Ascending aorta (tissue), 2 donors: ENCODE measurements at regions of chrX and their contacts with region 1.

Region 1: GRCh38 chrX:23907498-23908218 is at the starts of genes APOO and CXorf58:
- DNase-seq: peak; percentile 58 to 94
- H3K4me3 ChIP-seq: peak within 1 kb of the TSS; percentile 54 to 66
- H3K27ac ChIP-seq: peak within 1 kb of the TSS; percentile 78
- H3K4me1 ChIP-seq: no peaks in the 10 kb centered on the region
- H3K27me3 ChIP-seq: no peaks in the 10 kb centered on the region
- CTCF ChIP-seq: peak; percentile 59 to 88 (median 76)
- total RNA-seq, gene APOO: not detected
- total RNA-seq, gene CXorf58: not detected

Region 2: GRCh38 chrX:23667239-23668177 is 240.2 kb before region 1 on chrX and contains the start of gene PRDX4:
- intact Hi-C with region 1: loop called (anchors 1 kb)
- DNase-seq: peak; percentile 52 to 90
- H3K4me3 ChIP-seq: peak within 1 kb of the TSS; percentile 61 to 69
- H3K27ac ChIP-seq: peak within 1 kb of the TSS; percentile 74 to 76
- H3K4me1 ChIP-seq: no peaks in the 10 kb centered on the region
- H3K27me3 ChIP-seq: no peaks in the 10 kb centered on the region
- CTCF ChIP-seq: no peak
- total RNA-seq, gene PRDX4: 112 TPM

Region 3: GRCh38 chrX:23742697-23743622 is 164.7 kb before region 1 on chrX and contains the start of gene ACOT9:
- intact Hi-C with region 1: loop called (anchors 1 kb)
- DNase-seq: peak; percentile 87 to 97
- H3K4me3 ChIP-seq: peak within 1 kb of the TSS; percentile 71 to 79
- H3K27ac ChIP-seq: peak within 1 kb of the TSS; percentile 93 to 98
- H3K4me1 ChIP-seq: no peaks in the 10 kb centered on the region
- H3K27me3 ChIP-seq: no peaks in the 10 kb centered on the region
- CTCF ChIP-seq: no peak
- total RNA-seq, gene ACOT9: 6.6 TPM

Region 4: DNA sequence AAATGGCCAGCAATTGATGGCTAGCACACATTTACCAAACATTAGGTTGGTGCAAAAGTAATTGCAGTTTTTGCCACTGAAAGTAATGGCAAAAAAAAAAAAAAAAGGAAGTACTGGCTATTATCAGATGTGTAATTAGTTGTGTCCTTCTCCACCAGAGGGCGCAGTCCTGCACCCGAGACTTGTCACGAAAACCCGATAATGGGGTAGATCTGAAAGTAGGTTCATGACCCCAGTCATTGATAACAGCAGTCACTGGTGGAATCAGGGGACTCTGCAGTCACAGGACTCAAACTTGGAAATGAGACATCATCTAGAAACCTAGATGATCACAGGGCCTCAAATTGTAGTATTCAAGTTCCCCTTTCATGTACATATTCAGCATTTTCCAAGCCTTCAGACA is 151.5 kb before region 1 on chrX:
- intact Hi-C with region 1: no loop called
- DNase-seq: peak in 1 of 2 donors; percentile 75
- H3K4me3 ChIP-seq: no peak overlapping the region
- H3K27ac ChIP-seq: no peak overlapping the region
- H3K4me1 ChIP-seq: no peaks in the 10 kb centered on the region
- H3K27me3 ChIP-seq: no peaks in the 10 kb centered on the region
- CTCF ChIP-seq: peak in 2 of 3 experiments; percentile 26 to 36

Region 5: DNA sequence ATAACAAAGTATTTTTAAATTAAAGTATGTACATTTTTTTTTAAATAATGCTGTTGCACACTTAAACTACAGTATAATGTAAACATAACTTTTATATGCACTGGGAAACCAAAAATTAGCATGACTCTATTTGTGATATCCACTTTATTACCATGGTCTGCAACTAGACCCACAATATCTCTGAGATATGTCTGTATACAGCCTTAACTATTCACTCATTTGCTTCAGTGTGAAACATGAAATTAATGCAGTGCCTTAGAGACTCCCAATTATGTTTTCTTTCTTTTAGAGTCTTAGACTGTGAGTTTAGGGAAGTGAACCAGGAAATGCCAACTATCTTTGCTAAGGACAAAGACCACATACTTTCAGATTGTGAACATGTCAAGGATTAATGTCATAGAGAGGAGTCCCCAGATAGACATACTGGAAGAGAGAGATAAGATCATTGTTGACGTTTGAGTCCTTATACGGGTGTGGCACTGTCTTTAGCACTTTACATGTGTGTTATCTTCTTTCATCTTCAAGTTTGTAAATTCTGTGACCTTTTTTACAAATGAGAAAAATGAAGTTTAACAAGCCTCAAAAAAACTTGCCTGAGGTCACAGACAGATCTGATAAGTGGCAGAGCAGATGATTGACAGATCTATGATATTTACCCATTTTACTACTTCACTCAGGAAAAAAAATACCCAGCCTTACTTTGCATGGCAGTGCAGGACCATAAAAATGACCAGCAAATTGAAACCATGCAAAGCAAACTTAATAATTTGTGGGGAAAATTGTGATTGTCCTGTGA is 23.4 kb after region 1 on chrX:
- intact Hi-C with region 1: no loop called
- DNase-seq: no peak
- H3K4me3 ChIP-seq: no peak overlapping the region
- H3K27ac ChIP-seq: no peak overlapping the region
- H3K4me1 ChIP-seq: no peaks in the 10 kb centered on the region
- H3K27me3 ChIP-seq: no peaks in the 10 kb centered on the region
- CTCF ChIP-seq: no peak

Region 6: DNA sequence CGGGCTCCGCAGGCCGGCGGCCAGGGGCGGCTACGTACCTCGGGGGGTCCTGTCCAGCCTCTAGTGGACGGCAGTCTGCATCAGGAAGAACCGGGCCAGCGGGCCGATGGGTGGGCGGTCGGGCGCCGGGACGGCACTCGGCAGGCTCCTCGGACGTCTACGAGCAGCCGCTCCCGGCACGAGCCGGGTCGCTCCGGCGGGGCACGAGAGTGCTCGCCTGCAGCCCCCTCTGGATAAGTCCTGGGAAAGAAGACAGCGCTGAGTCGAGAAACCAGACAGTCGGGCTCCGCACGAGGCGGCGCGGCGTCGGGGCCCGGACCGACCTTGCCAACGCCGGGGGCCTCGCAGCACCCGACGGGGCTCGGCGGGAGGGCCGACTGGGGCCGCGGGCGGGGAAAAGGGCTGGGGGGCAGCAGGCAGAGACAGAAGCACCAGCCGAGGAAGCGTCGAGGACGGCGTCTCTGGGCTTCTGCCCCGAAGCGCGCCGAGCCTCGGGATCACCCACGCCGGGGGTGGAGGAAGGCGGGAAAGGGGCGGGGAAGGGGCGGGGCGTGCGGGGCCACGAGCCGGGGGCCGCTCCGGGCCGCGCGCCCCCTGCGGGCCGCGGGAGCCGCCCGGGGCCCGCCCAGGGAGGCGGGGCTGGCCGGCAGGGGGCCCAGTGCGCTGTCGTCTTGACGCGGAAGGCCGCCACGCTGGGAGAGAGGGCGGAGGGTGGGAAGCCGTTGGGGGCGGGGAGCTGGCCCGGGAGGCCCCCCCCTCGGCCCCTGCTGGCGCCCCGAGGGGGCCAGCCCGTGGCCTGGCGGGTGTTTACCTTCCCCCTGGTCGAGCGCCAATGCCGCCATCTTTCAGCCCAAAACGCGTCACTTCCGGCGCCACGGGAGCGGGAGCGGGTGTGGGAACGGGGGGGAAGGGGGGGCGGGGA is 117.4 kb after region 1 on chrX:
- intact Hi-C with region 1: loop called (anchors 1 kb)
- DNase-seq: peak; percentile 43 to 90
- H3K4me3 ChIP-seq: peak overlapping the region; percentile 75 to 94
- H3K27ac ChIP-seq: peak overlapping the region; percentile 93 to 96
- H3K4me1 ChIP-seq: no peaks in the 10 kb centered on the region
- H3K27me3 ChIP-seq: no peaks in the 10 kb centered on the region
- CTCF ChIP-seq: no peak

Region 7: DNA sequence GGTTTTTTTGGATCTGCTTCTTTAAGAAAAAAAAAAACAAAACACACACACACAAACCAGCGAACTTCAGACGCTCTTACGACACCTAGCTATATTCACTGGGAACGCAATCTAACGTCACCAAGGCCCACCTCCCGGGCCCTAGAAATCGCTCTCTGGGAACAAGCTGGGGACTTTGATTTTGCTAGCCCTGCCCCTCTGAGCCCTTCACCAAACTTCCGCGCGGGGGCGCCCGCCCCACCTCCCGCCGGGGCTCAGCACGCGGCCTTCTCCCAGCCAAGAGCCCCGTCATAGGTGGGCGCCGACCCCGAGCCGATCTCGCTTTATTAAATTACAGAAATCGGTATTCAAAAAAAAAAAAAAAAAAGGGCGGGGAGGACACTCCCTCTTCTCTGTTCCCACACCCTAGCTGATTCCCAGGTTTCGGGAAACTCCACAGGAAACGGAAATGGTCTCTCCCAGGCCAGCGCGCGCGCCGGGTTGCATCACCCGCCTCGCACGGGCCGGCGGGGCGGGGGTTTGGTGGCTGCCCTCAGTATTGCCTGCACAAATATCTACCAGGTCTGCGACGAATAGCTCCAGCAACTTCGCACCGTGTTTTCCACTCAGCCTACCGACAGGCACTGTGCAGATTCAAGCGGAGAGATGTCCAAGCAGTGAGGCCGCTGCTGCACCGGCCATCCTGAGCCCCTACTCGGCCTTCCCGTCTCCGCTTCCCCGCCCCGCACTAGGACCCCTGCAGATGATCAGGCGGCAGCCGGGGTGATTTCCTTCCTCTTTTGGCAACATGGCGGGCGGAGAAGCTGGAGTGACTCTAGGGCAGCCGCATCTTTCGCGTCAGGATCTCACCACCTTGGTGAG is 146.8 kb after region 1 on chrX and contains the start of gene EIF2S3:
- intact Hi-C with region 1: loop called (anchors 1 kb)
- DNase-seq: peak; percentile 70 to 95
- H3K4me3 ChIP-seq: no peak within 1 kb of the TSS
- H3K27ac ChIP-seq: peak within 1 kb of the TSS; percentile 87 to 93
- H3K4me1 ChIP-seq: peaks cover 0 to 13% of the 10 kb centered on the region in 2 donors
- H3K27me3 ChIP-seq: no peaks in the 10 kb centered on the region
- CTCF ChIP-seq: peak; percentile 28 to 77 (median 62)
- total RNA-seq, gene EIF2S3: 60.7 TPM

Region 8: DNA sequence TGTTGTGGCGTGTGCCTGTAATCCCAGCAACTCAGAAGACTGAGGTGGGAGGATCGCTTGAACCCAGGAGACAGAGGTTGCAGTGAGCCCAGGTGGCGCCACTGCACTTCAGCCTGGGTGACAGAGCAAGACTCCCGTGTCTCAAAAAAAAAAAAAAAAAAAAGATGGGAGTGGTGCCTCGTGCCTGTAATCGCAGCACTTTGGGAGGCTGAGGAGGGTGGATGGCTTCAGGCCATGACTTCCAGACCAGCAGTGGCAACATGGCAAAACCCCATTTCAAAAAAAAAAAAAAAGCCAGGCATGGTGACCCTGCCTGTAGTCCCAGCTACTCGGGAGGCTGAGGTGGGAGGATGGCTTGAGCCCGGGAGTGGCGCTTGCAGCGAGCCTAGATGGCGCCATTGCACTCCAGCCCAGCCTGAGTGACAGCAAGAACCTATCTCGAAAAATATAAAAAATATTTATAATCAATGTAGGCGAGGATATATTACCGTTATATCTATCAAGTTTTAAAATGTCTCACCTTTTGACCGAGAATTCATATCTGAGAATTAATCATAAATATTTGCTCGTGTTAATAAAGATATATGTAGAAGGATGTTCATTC is 174.1 kb after region 1 on chrX:
- intact Hi-C with region 1: no loop called
- DNase-seq: peak in 1 of 2 donors; percentile 70
- H3K4me3 ChIP-seq: no peak overlapping the region
- H3K27ac ChIP-seq: no peak overlapping the region
- H3K4me1 ChIP-seq: no peaks in the 10 kb centered on the region
- H3K27me3 ChIP-seq: no peaks in the 10 kb centered on the region
- CTCF ChIP-seq: peak in 2 of 3 experiments; percentile 44 to 45

Region 9: DNA sequence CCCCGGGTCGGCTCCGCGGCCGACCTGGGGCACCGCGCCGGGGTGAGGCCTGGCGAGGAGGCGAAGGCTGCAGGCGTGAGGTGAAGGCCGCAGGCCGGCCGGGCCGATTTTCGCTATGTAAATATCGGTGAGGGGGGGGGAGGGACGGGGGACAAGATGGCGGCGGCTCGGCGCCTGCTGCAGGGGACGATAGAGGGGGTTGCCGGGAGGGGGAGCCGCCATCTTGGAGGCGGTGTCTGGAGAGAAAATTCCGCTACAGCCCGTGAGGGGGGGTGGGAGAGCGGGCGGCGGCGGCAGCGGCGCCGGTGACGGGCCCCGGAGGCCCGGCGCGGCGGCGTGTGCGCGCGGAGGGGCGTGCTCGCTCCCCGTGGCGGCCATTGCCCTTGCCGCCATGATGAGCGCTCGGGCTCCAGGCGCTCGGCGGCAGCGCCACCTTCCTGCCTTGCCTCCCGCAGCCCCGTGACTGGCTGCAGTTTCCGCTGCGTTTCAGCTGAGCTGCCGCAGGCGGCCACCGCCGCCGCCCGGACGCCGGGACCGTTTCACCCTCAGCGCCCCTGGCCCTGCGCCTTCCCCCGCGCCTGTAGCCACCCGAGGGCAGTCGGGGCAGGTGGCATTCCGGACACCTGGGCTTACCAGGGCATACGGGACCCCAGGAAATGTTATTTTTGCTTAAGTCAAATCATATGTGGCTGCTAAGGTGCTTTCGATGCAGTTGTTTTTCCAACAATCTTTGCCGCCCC is 242.6 kb after region 1 on chrX:
- intact Hi-C with region 1: loop called (anchors 2 kb)
- DNase-seq: peak; percentile 71 to 95
- H3K4me3 ChIP-seq: peak overlapping the region; percentile 83 to 97
- H3K27ac ChIP-seq: peak overlapping the region; percentile 99 to 100
- H3K4me1 ChIP-seq: peaks cover 3 to 51% of the 10 kb centered on the region in 2 donors
- H3K27me3 ChIP-seq: no peaks in the 10 kb centered on the region
- CTCF ChIP-seq: peak; percentile 49 to 62 (median 57)

Region 10: DNA sequence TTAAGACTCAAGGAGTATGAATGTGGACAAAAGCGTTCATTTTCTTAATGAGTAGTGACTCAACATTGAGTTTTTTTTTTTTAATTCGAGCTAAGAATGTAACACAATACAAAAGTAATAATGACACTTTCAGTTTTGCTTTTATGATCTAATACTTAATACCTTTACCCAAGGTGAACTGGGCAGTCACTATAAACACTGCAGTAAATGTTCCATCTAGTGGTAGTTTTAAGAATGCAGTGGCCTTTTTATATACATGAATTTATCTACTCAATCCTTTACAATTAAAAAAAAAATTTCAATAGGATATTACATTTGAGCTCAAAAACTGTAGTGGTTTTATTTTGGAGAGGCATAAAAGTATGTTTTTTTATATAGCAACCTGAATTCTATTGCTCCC is 591.3 kb after region 1 on chrX:
- intact Hi-C with region 1: loop called (anchors 10 kb)
- DNase-seq: no peak
- H3K4me3 ChIP-seq: no peak overlapping the region
- H3K27ac ChIP-seq: no peak overlapping the region
- H3K4me1 ChIP-seq: peaks cover 0 to 7% of the 10 kb centered on the region in 2 donors
- H3K27me3 ChIP-seq: no peaks in the 10 kb centered on the region
- CTCF ChIP-seq: peak; percentile 34 to 54 (median 43)